AG04450 (cell line): ENCODE measurements at regions of chr18 and their contacts with region 1.

Region 1: DNA sequence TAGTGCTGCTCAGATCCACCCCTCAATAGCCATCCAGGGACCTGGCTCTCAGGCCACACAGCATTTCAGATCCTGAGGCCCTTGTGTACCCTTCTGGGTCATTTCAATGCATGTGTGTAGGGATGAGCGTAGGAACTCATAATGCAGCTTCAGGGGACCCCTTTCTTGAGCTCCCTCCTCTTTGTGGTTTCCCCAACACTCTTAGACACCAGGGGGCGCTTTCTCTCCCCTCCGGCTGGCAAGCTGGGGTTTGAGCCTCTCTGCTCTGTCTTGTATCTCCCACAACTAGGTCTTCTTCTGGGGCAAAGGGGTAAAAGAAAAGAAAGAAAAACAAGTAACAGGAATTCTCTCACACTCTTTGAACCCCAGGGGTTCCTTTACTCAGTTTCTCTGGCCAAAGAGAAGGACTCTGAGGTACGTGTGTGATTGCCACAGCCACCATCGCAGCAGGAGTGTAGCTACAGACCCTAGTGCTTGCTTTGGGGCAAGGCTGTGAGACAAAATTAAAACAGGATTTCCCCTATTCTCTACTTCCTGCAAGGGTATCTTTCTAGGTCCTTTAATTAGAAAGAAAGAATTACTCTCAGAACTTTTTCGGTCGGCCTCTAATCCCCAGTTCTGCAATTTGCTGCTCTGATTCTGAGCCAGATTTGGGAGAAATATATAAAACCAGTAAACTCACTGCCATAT is 38.0 kb downstream of the CABYR start:
- DNase-seq: peak; percentile 10
- H3K4me3 ChIP-seq: no peak overlapping the region
- H3K27ac ChIP-seq: no peak overlapping the region
- H3K27me3 ChIP-seq: no peaks in the 10 kb centered on the region
- CTCF ChIP-seq: peak; percentile 82

Region 2: DNA sequence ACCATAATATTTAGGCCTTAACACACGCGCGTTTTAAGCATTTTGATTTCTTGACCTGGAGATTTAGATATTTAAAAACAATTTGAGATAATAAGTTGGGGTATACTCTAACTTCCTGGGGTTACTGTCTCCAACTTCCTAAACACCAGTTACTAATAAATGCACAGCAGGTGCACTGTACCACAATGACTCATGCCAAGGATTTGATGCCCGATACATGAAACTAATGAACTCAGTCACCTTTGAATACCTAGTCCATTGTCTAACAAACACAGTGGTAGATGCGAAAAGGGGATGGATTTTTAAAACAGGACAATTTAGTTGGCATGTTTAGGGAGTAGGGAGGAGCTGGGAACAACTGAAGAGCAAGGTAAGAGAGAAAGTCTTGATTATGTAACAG is 16.8 kb before region 1 on chr18:
- CTCF ChIA-PET with region 1: interaction called, 10 read pairs
- POLR2A ChIA-PET with region 1: no interaction called
- DNase-seq: no peak
- H3K4me3 ChIP-seq: no peak overlapping the region
- H3K27ac ChIP-seq: no peak overlapping the region
- H3K27me3 ChIP-seq: no peaks in the 10 kb centered on the region
- CTCF ChIP-seq: no peak

Region 3: DNA sequence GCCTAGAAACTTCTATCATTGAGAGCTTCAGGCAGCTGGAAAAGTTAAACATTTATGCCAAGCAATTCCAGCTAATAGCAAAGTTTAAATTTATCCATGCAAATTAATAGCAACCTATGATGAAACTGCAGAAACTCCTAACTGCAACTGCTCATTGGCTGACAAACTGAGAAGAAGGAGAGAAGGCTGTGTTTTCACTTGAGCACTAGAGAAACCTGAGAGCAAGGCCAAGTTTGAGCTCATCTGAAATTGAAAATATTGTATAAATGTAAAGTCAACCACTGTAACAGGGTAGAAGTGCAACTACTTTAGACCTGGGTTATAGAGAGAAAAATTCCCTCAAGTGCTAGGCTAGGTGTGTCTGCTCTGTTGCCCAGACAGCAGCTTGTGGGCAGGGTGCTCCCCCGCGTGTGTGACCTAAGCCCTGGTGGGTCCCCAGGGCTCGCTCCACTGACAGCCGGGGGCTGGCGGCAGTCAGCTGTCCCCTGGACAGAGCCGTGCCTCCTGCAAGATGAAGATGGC is 12.2 kb after region 1 on chr18:
- CTCF ChIA-PET with region 1: interaction called, 57 read pairs
- POLR2A ChIA-PET with region 1: no interaction called
- DNase-seq: no peak
- H3K4me3 ChIP-seq: no peak overlapping the region
- H3K27ac ChIP-seq: no peak overlapping the region
- H3K27me3 ChIP-seq: no peaks in the 10 kb centered on the region
- CTCF ChIP-seq: no peak